Calu3 (cell line): ENCODE measurements at regions of chr12 and their contacts with region 1.

Region 1: DNA sequence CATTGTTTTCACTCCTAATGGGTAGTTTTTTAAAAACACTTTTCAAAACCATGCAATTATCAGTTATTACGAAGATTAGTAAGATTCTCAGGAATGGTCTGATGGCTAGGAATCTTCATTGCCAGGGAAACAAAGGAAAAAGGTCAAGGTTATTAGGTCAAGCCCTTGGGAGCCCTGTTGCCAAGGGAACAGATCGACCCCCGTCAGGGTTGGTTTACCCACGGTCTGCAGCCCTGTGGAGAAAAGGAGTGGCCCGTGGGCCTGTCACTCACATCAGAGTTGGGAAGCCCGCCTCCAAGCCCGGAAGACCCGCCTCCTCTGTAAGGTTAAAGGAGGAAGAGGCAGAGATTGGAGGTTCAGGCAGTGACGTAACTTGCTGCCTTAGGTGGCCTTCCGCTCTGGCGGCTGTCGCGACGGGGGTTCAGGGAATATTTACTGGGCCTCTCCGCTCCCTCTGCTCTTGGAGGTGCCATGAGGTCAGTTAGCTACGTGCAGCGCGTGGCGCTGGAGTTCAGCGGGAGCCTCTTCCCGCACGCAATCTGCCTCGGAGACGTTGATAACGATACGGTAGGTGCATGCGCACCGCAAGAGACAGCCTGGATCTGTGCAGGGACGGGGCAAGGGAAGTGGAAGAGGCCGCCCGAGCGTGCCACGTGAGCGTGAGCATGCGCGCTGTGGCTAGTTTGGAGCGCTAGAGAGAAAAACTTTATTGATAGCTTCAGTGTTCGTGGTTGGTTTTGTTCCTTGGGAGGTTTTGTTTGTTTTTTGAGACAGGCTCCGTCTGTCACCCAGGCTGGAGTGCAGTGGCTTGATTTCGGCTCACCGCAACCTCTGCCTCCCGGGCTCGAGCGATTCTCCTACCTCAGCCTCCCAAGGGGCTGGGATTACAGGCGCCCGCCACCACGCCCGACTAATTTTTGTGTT is at the start of gene ITFG2:
- DNase-seq: peak; percentile 96
- H3K4me3 Mint-ChIP-seq: peak within 1 kb of the TSS; percentile 86
- H3K27ac Mint-ChIP-seq: peak within 1 kb of the TSS; percentile 91
- H3K4me1 Mint-ChIP-seq: no peaks in the 10 kb centered on the region
- H3K27me3 Mint-ChIP-seq: no peaks in the 10 kb centered on the region
- CTCF ChIP-seq: no peak
- total RNA-seq, gene ITFG2: 26.7 and 31.9 TPM in 2 replicates

Region 2: DNA sequence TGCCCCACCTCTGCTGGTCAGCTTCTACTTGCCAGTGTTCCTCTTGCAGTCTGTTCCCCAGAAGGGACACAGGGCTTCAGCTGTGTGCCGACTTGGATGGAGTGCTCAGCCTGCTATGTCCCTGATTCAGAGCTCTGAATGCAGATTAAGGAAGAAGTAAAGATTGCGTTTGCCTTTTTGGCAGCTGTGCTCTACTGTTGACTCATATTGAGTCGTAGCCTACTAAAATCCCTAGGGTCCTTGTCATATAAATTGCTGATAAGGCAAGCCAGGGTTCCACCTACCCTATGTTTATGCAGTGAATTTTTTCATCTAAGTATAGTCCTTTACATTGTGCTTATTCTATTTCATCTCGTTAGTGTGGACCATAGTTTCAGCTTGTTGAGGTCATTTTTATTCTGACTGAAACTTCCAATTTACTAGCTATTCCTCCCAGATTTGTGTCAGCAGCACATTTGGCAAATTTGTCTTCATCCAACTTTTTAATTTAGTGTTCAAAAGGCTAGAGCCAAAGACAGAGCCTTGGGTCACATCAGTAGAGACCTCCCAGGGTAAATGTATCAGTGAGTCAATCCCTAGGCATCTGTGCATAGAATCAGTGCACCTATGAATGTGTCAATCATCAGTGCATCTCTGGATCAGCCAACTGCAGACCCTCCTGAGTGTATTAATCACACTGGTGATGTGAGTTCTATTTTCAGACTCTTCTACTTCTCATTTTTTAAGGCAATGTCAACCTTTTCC is 727.8 kb before region 1 on chr12:
- CTCF ChIA-PET with region 1: no interaction called
- intact Hi-C with region 1: no loop called
- DNase-seq: no peak
- H3K4me3 Mint-ChIP-seq: no peak overlapping the region
- H3K27ac Mint-ChIP-seq: no peak overlapping the region
- H3K4me1 Mint-ChIP-seq: no peaks in the 10 kb centered on the region
- H3K27me3 Mint-ChIP-seq: peaks cover 71% of the 10 kb centered on the region
- CTCF ChIP-seq: no peak

Region 3: GRCh38 chr12:2739817-2740641 is 72.5 kb before region 1 on chr12:
- CTCF ChIA-PET with region 1: no interaction called
- intact Hi-C with region 1: loop called (anchors 1 kb)
- DNase-seq: peak; percentile 43
- H3K4me3 Mint-ChIP-seq: no peak overlapping the region
- H3K27ac Mint-ChIP-seq: no peak overlapping the region
- H3K4me1 Mint-ChIP-seq: no peaks in the 10 kb centered on the region
- H3K27me3 Mint-ChIP-seq: peaks cover 91% of the 10 kb centered on the region
- CTCF ChIP-seq: peak; percentile 56